ENCODE measurements at regions of chr1 and their contacts with region 1.

Region 1: DNA sequence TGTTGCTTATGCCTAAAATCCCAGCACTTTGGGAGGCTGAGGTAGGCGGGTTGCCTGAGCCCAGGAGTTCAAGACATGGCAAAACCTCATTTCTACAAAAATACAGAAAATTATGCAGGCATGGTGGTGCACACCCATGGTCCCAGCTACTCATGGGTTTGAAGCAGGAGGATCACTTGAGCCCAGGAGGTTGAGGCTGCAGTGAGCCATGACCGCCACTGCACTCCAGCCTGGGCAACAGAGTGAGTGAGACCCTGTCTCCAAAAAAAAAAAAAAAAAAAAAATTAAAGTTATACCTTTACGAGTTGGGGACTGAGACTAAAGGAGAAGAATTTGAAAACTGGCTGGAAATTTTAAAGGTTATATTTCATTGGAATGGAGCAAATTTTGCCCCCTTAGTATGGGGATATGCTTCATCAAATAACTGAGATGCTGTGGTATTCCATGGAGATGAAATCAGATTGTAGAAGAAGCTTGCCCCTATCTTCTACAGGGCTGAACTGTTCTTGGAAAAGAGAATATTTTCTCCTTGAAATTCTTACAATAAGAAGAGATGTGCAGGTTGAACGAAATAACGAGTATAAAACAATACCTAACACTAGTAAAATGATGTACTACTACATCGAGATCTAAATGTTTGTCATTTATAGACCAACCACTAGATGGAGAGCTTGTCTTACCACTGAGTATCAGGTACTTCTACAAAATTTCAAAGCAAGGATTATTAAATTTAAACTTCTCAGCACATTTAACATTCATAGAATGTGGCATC is 34.9 kb upstream of the SCYL3 start:
- DNase-seq: no peak
- ATAC-seq: peak; percentile 49
- H3K4me3 Mint-ChIP-seq: no peak overlapping the region
- H3K27ac Mint-ChIP-seq: no peak overlapping the region
- H3K4me1 Mint-ChIP-seq: no peaks in the 10 kb centered on the region
- H3K27me3 Mint-ChIP-seq: no peaks in the 10 kb centered on the region
- CTCF ChIP-seq: peak; percentile 60

Region 2: DNA sequence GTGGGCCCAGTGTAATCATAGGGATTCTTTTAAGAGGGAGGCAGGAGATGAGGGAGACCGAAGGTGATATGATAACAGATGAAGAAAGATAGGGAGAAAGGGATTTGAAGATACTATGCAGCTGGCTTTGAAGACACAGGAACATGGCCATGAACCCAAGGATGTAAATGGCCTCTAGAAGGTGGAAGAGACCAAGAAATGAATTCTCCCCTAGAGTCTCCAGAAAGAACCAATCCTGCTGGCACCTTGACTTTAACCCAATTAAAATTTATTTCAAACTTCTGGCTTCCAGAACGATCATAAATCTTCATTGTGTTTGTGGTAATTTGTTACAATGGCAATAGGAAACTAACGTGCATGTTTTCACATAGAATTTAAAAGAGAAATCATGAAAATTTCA is 508.3 kb after region 1 on chr1:
- CTCF ChIA-PET with region 1: no interaction called
- POLR2A ChIA-PET with region 1: no interaction called
- intact Hi-C with region 1: loop called (anchors 10 kb)
- DNase-seq: no peak
- ATAC-seq: no peak
- H3K4me3 Mint-ChIP-seq: no peak overlapping the region
- H3K27ac Mint-ChIP-seq: no peak overlapping the region
- H3K4me1 Mint-ChIP-seq: no peaks in the 10 kb centered on the region
- H3K27me3 Mint-ChIP-seq: no peaks in the 10 kb centered on the region
- CTCF ChIP-seq: no peak

Region 3: GRCh38 chr1:170531758-170532657 is 603.4 kb after region 1 on chr1 and contains the start of gene GORAB:
- CTCF ChIA-PET with region 1: no interaction called
- POLR2A ChIA-PET with region 1: no interaction called
- intact Hi-C with region 1: loop called (anchors 10 kb)
- DNase-seq: peak; percentile 77
- ATAC-seq: peak; percentile 98
- H3K4me3 Mint-ChIP-seq: no peak within 1 kb of the TSS
- H3K27ac Mint-ChIP-seq: no peak within 1 kb of the TSS
- H3K4me1 Mint-ChIP-seq: peaks cover 13% of the 10 kb centered on the region
- H3K27me3 Mint-ChIP-seq: peaks cover 4% of the 10 kb centered on the region
- CTCF ChIP-seq: no peak
- total RNA-seq, gene GORAB: 20.0 and 20.2 TPM in 2 replicates

Region 4: GRCh38 chr1:170664828-170665612 is 736.4 kb after region 1 on chr1:
- CTCF ChIA-PET with region 1: no interaction called
- POLR2A ChIA-PET with region 1: no interaction called
- intact Hi-C with region 1: loop called (anchors 10 kb)
- DNase-seq: no peak
- ATAC-seq: no peak
- H3K4me3 Mint-ChIP-seq: no peak overlapping the region
- H3K27ac Mint-ChIP-seq: no peak overlapping the region
- H3K4me1 Mint-ChIP-seq: peaks cover 15% of the 10 kb centered on the region
- H3K27me3 Mint-ChIP-seq: peaks cover 67% of the 10 kb centered on the region
- CTCF ChIP-seq: no peak

Region 5: DNA sequence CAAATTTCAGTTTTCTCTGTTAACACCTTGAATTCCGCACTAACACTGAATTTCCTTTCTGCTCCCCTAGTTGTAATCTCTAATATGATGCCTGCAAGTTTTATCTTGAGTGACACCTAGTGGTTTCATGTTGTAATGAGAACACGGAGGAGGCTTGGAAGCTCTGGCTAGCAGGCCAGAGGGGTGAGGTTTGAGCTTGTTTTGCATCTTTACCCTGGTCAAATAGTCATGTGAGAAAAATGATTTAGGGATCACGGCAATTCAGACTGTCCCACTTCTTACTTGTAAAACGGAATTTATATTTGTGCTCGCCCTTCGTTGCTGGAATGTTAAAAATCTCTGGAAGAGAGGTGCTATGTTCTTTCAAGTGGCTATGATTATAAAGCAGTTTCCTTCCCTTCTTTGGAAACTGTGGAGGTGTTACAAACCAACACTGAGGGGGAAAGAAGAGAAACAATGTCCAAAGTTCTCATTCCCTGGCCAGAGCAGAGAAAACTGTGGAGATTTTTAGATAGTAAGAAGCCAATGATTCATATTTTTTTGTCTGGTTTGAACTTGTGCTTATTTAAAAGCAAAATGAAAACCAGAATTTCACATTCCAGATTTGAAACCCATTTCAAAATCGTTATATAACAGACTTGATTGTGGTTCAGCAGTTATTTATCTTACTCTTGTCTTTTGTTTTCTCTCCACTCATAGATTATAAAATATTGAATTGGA is 1001.4 kb after region 1 on chr1:
- CTCF ChIA-PET with region 1: interaction called, 4 read pairs
- POLR2A ChIA-PET with region 1: no interaction called
- intact Hi-C with region 1: loop called (anchors 1 kb)
- DNase-seq: no peak
- ATAC-seq: peak; percentile 67
- H3K4me3 Mint-ChIP-seq: no peak overlapping the region
- H3K27ac Mint-ChIP-seq: no peak overlapping the region
- H3K4me1 Mint-ChIP-seq: peaks cover 3% of the 10 kb centered on the region
- H3K27me3 Mint-ChIP-seq: peaks cover 3% of the 10 kb centered on the region
- CTCF ChIP-seq: no peak

Region 6: GRCh38 chr1:171188388-171189266 is 1260.0 kb after region 1 on chr1:
- CTCF ChIA-PET with region 1: no interaction called
- POLR2A ChIA-PET with region 1: no interaction called
- intact Hi-C with region 1: loop called (anchors 5 kb)
- DNase-seq: no peak
- ATAC-seq: no peak
- H3K4me3 Mint-ChIP-seq: no peak overlapping the region
- H3K27ac Mint-ChIP-seq: no peak overlapping the region
- H3K4me1 Mint-ChIP-seq: no peaks in the 10 kb centered on the region
- H3K27me3 Mint-ChIP-seq: peaks cover 7% of the 10 kb centered on the region
- CTCF ChIP-seq: peak; percentile 30

Region 7: GRCh38 chr1:171226747-171227370 is 1298.2 kb after region 1 on chr1:
- CTCF ChIA-PET with region 1: interaction called, 4 read pairs
- POLR2A ChIA-PET with region 1: no interaction called
- intact Hi-C with region 1: loop called (anchors 5 kb)
- DNase-seq: no peak
- ATAC-seq: peak; percentile 52
- H3K4me3 Mint-ChIP-seq: no peak overlapping the region
- H3K27ac Mint-ChIP-seq: no peak overlapping the region
- H3K4me1 Mint-ChIP-seq: no peaks in the 10 kb centered on the region
- H3K27me3 Mint-ChIP-seq: no peaks in the 10 kb centered on the region
- CTCF ChIP-seq: no peak